ENCODE measurements at regions of chr3 and their contacts with region 1.

Region 1: GRCh38 chr3:100089812-100090668 is 24.3 kb downstream of the FILIP1L start:
- DNase-seq: no peak
- H3K4me3 ChIP-seq: no peak overlapping the region
- CTCF ChIP-seq: peak; percentile 67

Region 2: DNA sequence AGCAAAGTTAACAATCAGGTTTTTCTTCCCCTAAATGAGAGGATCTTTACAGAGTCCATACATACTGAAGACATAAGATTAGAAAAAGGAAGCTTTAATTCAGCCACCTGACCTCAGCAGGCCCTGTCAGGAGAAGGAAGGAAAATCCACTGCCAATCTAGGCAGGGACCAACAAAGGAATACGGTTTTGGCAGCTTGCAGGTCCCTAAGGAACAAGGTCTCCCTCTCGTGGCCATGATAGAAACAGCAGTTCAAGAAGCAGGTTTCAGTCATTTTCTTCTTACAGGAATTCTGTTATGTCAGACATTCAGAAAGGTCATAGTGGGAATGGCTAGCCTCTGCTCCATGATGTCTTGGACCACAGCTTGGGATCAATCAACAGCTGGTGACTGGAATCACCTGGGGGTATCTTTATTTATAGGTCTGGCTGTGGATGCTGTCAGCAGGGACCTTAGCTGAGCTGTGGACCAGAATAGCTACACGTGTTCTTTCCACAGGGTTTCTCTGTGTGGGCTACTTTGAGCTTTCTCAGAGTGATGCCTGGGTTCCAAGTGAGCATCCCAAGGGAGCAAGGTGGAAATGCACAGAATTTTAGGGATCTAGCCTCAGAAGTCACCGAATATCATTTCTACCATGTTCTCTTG is 281.8 kb before region 1 on chr3:
- CTCF ChIA-PET with region 1: no interaction called
- POLR2A ChIA-PET with region 1: no interaction called
- DNase-seq: peak; percentile 51
- H3K4me3 ChIP-seq: no peak overlapping the region
- CTCF ChIP-seq: peak; percentile 85

Region 3: GRCh38 chr3:100057716-100058575 is 32.1 kb before region 1 on chr3:
- CTCF ChIA-PET with region 1: no interaction called
- POLR2A ChIA-PET with region 1: no interaction called
- DNase-seq: no peak
- H3K4me3 ChIP-seq: no peak overlapping the region
- CTCF ChIP-seq: no peak

Region 4: DNA sequence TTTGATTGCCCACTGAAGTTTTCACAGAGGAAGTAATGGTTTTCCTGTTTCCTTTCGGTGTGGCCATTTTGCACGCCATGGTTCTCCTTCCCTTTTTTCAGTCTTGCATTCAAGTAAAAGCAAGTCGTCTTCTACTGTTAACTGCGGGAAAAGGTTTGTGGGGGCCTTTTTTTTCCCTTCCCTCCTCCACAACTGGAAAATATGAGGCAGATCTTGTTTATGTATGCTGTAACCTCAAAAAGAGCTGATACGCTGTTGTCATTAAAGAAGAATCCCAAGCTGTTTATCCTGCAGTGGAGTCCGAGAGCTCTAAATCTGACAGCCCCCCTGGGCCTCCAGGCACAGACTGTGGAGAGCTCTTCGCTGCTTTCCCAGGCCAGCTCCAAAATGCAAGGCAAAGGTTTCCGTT is 16.1 kb before region 1 on chr3:
- CTCF ChIA-PET with region 1: interaction called, 13 read pairs
- POLR2A ChIA-PET with region 1: no interaction called
- DNase-seq: peak; percentile 82
- H3K4me3 ChIP-seq: no peak overlapping the region
- CTCF ChIP-seq: no peak

Region 5: DNA sequence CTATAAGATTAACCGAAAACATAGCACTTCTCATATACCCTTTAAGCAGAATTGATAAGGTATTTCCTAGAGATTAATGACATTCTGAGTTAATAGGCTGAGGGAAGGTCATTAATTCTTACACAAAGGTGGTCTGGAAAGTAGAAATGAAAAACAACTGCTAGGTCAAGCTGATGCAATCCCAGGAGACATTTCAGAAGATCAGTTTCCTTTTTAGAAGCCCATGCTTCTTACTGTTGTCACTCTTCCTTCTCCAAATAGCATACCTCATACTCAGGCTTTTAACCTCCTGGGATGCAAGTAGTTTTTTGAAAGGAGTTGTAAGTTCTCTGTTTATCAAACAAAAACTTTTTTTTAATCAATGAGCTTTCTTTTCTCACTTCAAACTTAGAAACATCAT is 15.5 kb after region 1 on chr3:
- CTCF ChIA-PET with region 1: interaction called, 16 read pairs
- POLR2A ChIA-PET with region 1: interaction called, 4 read pairs
- DNase-seq: no peak
- H3K4me3 ChIP-seq: no peak overlapping the region
- CTCF ChIP-seq: no peak

Measured in AG04449 (cell line).